H1 (cell line): ENCODE measurements at regions of chr10 and their contacts with region 1.

Region 1: DNA sequence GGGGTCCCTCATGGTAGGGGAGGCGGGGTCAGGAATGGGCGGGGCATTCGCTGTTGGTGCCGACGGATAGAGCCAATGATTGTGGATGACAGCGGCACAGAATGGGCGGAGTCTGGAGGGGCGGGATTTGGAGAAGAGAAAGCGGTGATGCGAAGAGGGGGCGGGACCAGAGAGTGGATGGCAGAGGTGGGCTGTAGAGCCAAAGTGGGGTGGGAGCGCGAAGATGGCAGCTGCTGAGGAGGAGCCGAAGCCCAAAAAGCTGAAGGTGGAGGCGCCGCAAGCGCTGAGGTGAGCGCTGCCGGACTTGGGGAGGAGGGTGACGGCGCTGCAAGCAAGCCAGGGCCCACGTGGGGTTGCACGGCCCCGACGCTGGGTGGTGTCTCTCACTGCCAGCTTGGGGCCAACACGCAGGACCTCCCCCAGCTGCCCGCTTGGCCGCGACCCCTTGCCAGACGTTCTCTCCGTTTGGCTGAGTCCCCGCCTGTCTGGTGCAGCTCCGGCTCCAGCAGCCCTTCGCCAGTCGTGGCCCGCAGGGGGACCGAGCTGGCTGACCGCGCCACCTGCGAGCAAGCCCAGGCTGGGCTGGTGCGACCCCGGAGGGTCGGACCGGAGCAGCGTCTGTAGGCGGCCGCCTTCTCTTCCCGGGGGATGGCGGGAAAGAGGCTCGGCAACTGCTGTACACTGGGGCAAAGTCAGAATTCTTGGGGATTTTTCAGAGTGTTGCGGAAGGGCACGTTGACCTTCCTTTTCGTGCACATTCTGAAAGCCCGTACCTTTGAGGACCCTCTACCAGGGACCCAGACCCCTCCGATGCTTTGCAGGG is at the start of gene ADK:
- DNase-seq: peak; percentile 98 to 100
- H3K4me3 ChIP-seq: peak within 1 kb of the TSS; percentile 79 to 98 (median 94)
- H3K27ac ChIP-seq: peak within 1 kb of the TSS; percentile 95
- H3K4me1 ChIP-seq: peaks cover 0 to 2% (median under 1%) of the 10 kb centered on the region in 4 experiments; a peak in 3 of 7 replicates
- H3K27me3 ChIP-seq: no peaks in the 10 kb centered on the region
- CTCF ChIP-seq: peak in 2 of 3 experiments; percentile 35 to 47; a peak in 3 of 4 replicates
- EP300 ChIP-seq: no peak
- POLR2A ChIP-seq: peak in 1 of 2 experiments; percentile 95; a peak in 2 of 3 replicates
- RAD21 ChIP-seq: peak in 1 of 2 experiments; percentile 41; a peak in 2 of 4 replicates
- total RNA-seq, gene ADK: 39.8 and 42.4 TPM in 2 replicates

Region 2: GRCh38 chr10:74137992-74138391 is 13.3 kb before region 1 on chr10:
- CTCF ChIA-PET with region 1: interaction called, 11 read pairs
- POLR2A ChIA-PET with region 1: interaction called, 11 read pairs
- DNase-seq: no peak
- H3K4me3 ChIP-seq: no peak overlapping the region
- H3K27ac ChIP-seq: no peak overlapping the region
- H3K4me1 ChIP-seq: no peaks in the 10 kb centered on the region
- H3K27me3 ChIP-seq: no peaks in the 10 kb centered on the region
- CTCF ChIP-seq: no peak
- EP300 ChIP-seq: no peak
- POLR2A ChIP-seq: no peak
- RAD21 ChIP-seq: no peak